Common myeloid progenitor, CD34-positive (primary cell): ENCODE measurements at regions of chr1 and their contacts with region 1.

Region 1: GRCh38 chr1:206080026-206080820 is 27.2 kb downstream of the RHEX start:
- DNase-seq: peak in 2 of 3 donors; percentile 63 to 73
- H3K4me3 ChIP-seq: peak overlapping the region in 2 of 7 experiments; percentile 10 to 26
- H3K27ac ChIP-seq: no peak overlapping the region
- H3K4me1 ChIP-seq: peaks cover 9 to 63% (median 54%) of the 10 kb centered on the region in 4 experiments
- H3K27me3 ChIP-seq: no peaks in the 10 kb centered on the region

Region 2: DNA sequence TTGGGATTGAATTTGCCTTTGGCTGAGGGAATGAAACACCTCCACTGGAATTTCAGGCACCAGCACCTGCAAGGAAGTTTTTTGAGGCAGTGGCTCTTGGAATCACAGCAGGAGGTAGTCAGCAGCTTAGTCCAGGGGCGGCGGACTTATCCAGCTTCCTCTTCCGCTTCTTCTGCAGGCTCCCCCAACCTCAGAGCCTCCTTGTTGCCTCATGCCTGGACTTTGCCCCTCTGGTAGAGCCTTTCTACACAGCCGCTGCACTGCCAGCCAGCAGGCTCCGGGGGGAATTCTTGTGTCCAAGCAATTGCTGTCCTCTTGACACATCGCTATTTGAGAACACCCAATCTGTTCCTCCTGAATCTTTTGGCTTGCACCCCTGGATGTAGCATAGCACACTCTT is 31.6 kb before region 1 on chr1:
- CTCF ChIA-PET with region 1: no interaction called
- POLR2A ChIA-PET with region 1: no interaction called
- DNase-seq: no peak
- H3K4me3 ChIP-seq: no peak overlapping the region
- H3K27ac ChIP-seq: no peak overlapping the region
- H3K4me1 ChIP-seq: peaks cover 8 to 22% (median 15%) of the 10 kb centered on the region in 4 experiments
- H3K27me3 ChIP-seq: no peaks in the 10 kb centered on the region

Region 3: DNA sequence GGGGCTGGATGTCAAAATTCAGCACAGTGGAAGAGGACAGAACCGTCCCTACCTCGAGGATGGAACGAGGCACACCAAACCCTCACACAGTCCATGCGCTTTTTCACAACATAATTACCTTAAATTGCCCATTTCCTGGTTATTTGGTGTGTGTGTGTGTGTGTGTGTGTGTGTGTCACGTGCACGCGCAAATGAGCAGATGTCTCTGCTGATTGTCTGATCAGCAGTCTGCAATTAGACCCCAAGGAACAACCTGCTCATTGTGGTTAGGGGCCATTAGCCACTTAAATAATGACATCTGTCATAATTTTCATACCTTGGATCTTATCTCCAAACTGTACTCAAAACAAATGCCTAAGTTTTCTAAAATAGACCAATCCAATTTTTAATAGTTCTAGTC is 13.8 kb after region 1 on chr1:
- CTCF ChIA-PET with region 1: interaction called, 25 read pairs
- POLR2A ChIA-PET with region 1: no interaction called
- DNase-seq: peak; percentile 74 to 98 (median 95)
- H3K4me3 ChIP-seq: no peak overlapping the region
- H3K27ac ChIP-seq: peak overlapping the region; percentile 65 to 67
- H3K4me1 ChIP-seq: peaks cover 16 to 72% (median 49%) of the 10 kb centered on the region in 4 experiments
- H3K27me3 ChIP-seq: no peaks in the 10 kb centered on the region